ENCODE measurements at regions of chr3 and their contacts with region 1.

Region 1: DNA sequence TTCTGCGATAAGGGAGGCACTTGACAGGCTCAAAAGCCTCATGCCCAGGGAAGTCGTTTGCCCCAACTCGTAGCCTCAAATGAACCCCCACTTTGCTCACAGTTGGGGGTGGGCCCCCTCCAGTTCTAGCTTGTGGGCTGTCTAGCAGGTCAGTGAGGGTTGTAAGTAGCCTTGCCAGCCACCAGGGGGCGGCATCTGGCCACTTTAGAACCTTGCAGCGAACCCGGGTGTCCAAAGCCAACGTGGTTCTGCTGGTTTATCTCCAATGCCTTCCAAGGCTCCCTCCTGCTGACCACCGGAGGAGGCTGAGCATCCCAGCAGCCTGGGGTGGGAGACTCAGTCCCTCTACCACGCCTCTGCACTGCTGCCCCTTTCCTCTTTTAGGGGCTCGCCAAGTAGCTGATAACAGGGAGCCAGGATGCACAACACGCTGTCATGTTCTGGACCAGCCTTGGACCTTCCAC is 9.2 kb upstream of the RBSN start:
- DNase-seq: peak; percentile 86
- H3K4me3 ChIP-seq: no peak overlapping the region
- H3K27ac ChIP-seq: no peak overlapping the region
- H3K4me1 ChIP-seq: peaks cover 0 to 2% of the 10 kb centered on the region in 2 experiments; a peak in 1 of 4 replicates
- H3K27me3 ChIP-seq: no peaks in the 10 kb centered on the region; the same call in 1 of the 2 replicates
- CTCF ChIP-seq: peak; percentile 84
- EP300 ChIP-seq: no peak
- RAD21 ChIP-seq: peak; percentile 82

Region 2: DNA sequence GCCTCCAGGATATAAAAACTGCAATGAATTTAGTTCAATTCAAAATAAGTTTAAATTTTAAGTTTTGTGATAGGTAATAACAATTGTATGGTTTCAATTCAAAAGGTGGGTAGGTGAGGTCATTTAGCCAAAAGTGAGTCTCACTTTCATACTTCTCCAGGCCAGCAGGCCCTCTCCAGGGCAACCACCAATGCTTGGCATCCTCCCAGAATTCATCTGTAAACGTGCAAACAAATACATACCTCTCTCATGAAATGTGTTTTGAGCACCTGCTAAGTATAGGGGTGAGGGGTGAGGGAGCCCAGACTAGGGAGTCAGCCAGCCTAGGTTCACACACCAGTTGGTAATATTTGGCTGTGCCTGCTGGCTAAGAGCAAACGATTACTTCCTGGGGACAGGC is 12.9 kb after region 1 on chr3:
- CTCF ChIA-PET with region 1: interaction called, 60 read pairs
- POLR2A ChIA-PET with region 1: interaction called, 9 read pairs
- DNase-seq: no peak
- H3K4me3 ChIP-seq: no peak overlapping the region
- H3K27ac ChIP-seq: no peak overlapping the region
- H3K4me1 ChIP-seq: no peaks in the 10 kb centered on the region; a peak in 1 of 4 replicates
- H3K27me3 ChIP-seq: no peaks in the 10 kb centered on the region
- CTCF ChIP-seq: no peak
- EP300 ChIP-seq: no peak
- RAD21 ChIP-seq: no peak

Region 3: DNA sequence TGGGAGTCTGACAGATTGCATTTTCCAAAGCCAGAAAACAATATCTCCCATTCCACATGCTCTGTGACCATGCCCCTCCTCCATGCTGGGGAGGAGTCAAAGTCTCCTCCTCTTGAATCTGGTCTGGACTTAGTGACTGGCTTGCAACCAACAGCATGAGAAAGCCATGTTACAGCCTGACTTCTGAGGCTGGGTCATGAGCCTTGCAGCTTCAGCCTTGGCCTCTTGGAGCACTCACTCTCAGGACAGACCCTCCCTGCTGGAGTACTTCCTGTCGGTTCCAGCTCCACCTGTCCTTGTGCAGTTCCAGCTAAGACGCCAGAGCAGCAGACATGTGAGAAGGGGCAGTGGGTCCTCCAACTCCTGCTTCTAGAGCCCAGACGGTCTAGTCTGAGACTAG is 40.5 kb after region 1 on chr3:
- CTCF ChIA-PET with region 1: interaction called, 10 read pairs
- POLR2A ChIA-PET with region 1: no interaction called
- DNase-seq: no peak
- H3K4me3 ChIP-seq: no peak overlapping the region
- H3K27ac ChIP-seq: no peak overlapping the region
- H3K4me1 ChIP-seq: peaks cover 0 to 3% of the 10 kb centered on the region in 2 experiments; a peak in 1 of 4 replicates
- H3K27me3 ChIP-seq: no peaks in the 10 kb centered on the region
- CTCF ChIP-seq: no peak
- EP300 ChIP-seq: no peak
- RAD21 ChIP-seq: no peak